IMR-90 (cell line): ENCODE measurements at regions of chr7 and their contacts with region 1.

Region 1: GRCh38 chr7:16028103-16028502 is 341.6 kb upstream of the MEOX2 start:
- DNase-seq: peak; percentile 95
- ATAC-seq: peak; percentile 52
- H3K4me3 ChIP-seq: no peak overlapping the region
- H3K27ac ChIP-seq: peak overlapping the region; percentile 80; the same call in 1 of the 2 replicates
- H3K4me1 ChIP-seq: peaks cover 22% of the 10 kb centered on the region
- H3K27me3 ChIP-seq: no peaks in the 10 kb centered on the region
- CTCF ChIP-seq: no peak
- POLR2A ChIP-seq: no peak
- RAD21 ChIP-seq: no peak

Region 2: GRCh38 chr7:15937571-15937970 is 90.5 kb before region 1 on chr7:
- CTCF ChIA-PET with region 1: no interaction called
- POLR2A ChIA-PET with region 1: no interaction called
- dilution Hi-C with region 1: no loop called
- in situ Hi-C with region 1: no loop called
- intact Hi-C with region 1: loop called (anchors 5 kb)
- DNase-seq: peak; percentile 56
- ATAC-seq: peak; percentile 48
- H3K4me3 ChIP-seq: no peak overlapping the region
- H3K27ac ChIP-seq: peak overlapping the region; percentile 9; the same call in 1 of the 2 replicates
- H3K4me1 ChIP-seq: peaks cover 6% of the 10 kb centered on the region
- H3K27me3 ChIP-seq: no peaks in the 10 kb centered on the region
- CTCF ChIP-seq: no peak
- POLR2A ChIP-seq: no peak
- RAD21 ChIP-seq: no peak